Activated CD4-positive, alpha-beta T cell treated with anti-CD3 and anti-CD28 coated beads for 36 hours (primary cell): ENCODE measurements at regions of chr7 and their contacts with region 1.

Region 1: GRCh38 chr7:104267701-104268368 is 60.0 kb upstream of the ORC5 start:
- DNase-seq: no peak
- ATAC-seq: no peak
- H3K4me3 Mint-ChIP-seq: no peak overlapping the region
- H3K27ac Mint-ChIP-seq: no peak overlapping the region
- H3K4me1 Mint-ChIP-seq: no peaks in the 10 kb centered on the region
- H3K27me3 Mint-ChIP-seq: peaks cover 22% of the 10 kb centered on the region

Region 2: GRCh38 chr7:103573479-103574058 is 694.3 kb before region 1 on chr7:
- CTCF ChIA-PET with region 1: no interaction called
- POLR2A ChIA-PET with region 1: no interaction called
- intact Hi-C with region 1: loop called in 1 of 2 experiments (anchors 5 kb)
- DNase-seq: no peak
- ATAC-seq: no peak
- H3K4me3 Mint-ChIP-seq: no peak overlapping the region
- H3K27ac Mint-ChIP-seq: no peak overlapping the region
- H3K4me1 Mint-ChIP-seq: no peaks in the 10 kb centered on the region
- H3K27me3 Mint-ChIP-seq: peaks cover 8% of the 10 kb centered on the region

Region 3: DNA sequence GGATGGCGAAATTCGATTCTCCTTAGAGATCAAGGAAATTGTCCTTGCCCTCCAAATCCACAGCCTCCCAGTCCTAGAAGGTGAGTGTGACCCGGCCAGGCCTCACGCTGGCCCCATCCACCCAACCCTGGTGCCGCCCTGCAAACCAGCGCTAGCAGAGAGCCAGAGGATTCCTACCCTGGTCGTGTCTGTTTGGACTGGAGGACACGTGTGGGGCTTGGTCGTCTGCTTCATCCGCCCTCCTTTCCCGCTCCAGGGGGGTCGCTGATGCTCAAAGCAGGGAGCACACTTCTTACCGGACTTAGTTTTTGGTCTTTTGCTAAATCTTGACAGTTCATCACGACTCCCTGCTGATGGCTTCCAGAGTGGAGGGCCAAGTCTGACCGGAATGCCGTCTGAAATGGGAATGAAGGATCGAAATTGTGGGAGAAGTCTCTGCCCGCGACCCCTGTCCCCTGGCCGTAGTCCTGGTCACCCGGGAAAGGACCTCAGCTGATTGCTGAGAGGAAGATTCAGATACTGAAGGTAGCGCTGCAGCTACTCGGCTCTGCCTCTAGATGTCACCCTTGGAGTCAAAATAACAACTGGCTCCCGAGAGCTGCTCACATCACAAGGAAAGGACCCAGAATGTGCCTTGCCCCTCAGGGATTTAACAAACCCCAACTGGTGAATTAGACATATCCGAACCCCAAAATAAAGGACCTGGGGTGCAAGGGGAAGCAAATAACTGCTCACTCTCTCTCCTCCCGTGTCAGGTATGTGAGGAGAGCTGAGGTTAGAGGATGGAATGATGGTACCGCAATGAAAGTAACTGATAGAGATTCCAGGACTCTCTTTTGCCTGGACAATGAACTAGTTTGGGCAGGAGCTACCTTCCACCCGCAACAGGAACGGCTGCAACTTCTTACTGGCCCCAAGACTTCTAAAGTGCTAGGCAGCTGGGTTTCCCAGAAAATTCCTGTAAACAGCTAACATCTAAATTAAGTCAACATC is 36.5 kb before region 1 on chr7:
- CTCF ChIA-PET with region 1: interaction called, 26 read pairs
- POLR2A ChIA-PET with region 1: no interaction called
- intact Hi-C with region 1: loop called (anchors 2 kb)
- DNase-seq: peak; percentile 58
- ATAC-seq: peak; percentile 75
- H3K4me3 Mint-ChIP-seq: no peak overlapping the region
- H3K27ac Mint-ChIP-seq: no peak overlapping the region
- H3K4me1 Mint-ChIP-seq: peaks cover 4% of the 10 kb centered on the region
- H3K27me3 Mint-ChIP-seq: peaks cover 21% of the 10 kb centered on the region

Region 4: DNA sequence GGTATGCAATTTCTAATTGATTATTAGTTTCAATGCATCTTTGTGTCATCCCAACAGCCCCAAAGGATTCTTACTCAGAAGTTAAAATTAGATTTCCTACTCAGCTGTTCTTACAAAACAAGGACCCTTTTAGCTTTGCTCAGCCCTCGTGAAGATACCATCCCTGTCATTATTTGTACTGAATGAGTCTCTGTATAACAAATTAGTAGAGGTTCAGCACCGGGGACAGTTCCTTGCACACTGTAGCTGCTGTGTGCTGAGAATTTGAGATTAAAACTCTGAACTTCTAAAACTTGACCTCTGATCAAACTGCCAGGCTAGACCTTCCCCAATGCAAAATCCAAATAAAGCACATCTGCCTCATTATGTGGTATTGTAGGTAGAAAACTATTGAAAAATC is 359.7 kb after region 1 on chr7:
- CTCF ChIA-PET with region 1: no interaction called
- POLR2A ChIA-PET with region 1: no interaction called
- intact Hi-C with region 1: no loop called
- DNase-seq: peak; percentile 26
- ATAC-seq: no peak
- H3K4me3 Mint-ChIP-seq: no peak overlapping the region
- H3K27ac Mint-ChIP-seq: no peak overlapping the region
- H3K4me1 Mint-ChIP-seq: no peaks in the 10 kb centered on the region
- H3K27me3 Mint-ChIP-seq: peaks cover 5% of the 10 kb centered on the region